ENCODE measurements at regions of chr17 and their contacts with region 1.

Region 1: GRCh38 chr17:28675980-28676379 is 14.0 kb downstream of the SUPT6H start:
- DNase-seq: no peak

Region 2: DNA sequence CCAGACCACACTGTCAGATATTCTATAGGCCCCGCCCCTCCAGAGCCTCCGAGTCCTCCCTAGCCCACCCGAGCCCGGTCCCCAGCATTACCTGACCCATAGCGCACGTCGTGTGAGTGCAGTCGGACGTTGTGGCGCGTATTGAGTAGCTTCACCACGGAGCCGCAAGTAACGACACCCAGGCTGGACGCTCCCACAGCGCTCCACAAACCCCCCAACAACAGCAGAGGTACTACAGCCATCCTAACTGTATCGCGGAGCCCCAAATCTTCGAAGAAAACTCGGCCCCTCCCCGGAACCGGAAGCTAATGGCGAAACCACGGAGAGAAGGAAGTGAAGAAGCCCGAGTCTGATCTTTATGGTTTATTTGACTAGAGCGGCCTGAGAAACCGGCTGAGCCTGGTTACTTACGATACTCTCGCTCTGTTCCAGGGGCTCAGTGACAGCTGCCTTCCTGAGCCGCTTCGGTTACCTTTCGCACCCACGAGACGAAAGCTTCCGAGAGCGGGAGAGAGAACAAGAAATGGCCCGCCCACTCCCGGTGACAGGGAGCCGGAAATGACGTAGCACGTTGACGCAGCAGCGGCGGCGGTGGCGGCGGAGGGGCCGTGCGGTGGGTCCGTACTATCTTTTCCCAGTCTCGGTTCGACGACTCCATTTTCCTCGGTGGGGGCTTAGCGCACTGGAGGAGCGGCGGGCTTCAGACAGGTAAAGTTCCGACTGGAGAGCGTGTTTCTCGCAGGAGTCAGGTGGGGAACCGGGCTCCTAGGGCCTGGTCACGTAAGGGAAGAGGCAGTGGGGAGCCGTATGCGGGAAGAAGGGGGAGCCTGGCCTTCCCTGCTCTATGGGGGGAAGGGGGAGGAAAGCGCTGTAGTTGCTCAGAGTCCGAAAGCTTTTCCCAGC is 14.1 kb before region 1 on chr17 and contains the starts of genes SDF2 and SUPT6H:
- CTCF ChIA-PET with region 1: no interaction called
- POLR2A ChIA-PET with region 1: interaction called, 12 read pairs
- DNase-seq: peak; percentile 89

Region 3: GRCh38 chr17:28792877-28793661 is 117.1 kb after region 1 on chr17:
- CTCF ChIA-PET with region 1: no interaction called
- POLR2A ChIA-PET with region 1: no interaction called
- DNase-seq: peak; percentile 16